Activated CD8-positive, alpha-beta T cell treated with anti-CD3 and anti-CD28 coated beads for 36 hours (primary cell): ENCODE measurements at regions of chr17 and their contacts with region 1.

Region 1: GRCh38 chr17:72556944-72557826 is 436.4 kb downstream of the SOX9 start:
- DNase-seq: peak; percentile 78
- ATAC-seq: peak; percentile 73
- H3K4me3 Mint-ChIP-seq: no peak overlapping the region
- H3K27ac Mint-ChIP-seq: no peak overlapping the region
- H3K4me1 Mint-ChIP-seq: no peaks in the 10 kb centered on the region
- H3K27me3 Mint-ChIP-seq: peaks cover 2% of the 10 kb centered on the region
- CTCF ChIP-seq: peak; percentile 72

Region 2: GRCh38 chr17:72539981-72540897 is 16.9 kb before region 1 on chr17:
- CTCF ChIA-PET with region 1: interaction called, 16 read pairs
- POLR2A ChIA-PET with region 1: no interaction called
- intact Hi-C with region 1: no loop called
- DNase-seq: peak; percentile 54
- ATAC-seq: peak; percentile 82
- H3K4me3 Mint-ChIP-seq: no peak overlapping the region
- H3K27ac Mint-ChIP-seq: no peak overlapping the region
- H3K4me1 Mint-ChIP-seq: peaks cover 5% of the 10 kb centered on the region
- H3K27me3 Mint-ChIP-seq: peaks cover 29% of the 10 kb centered on the region
- CTCF ChIP-seq: peak; percentile 78

Region 3: DNA sequence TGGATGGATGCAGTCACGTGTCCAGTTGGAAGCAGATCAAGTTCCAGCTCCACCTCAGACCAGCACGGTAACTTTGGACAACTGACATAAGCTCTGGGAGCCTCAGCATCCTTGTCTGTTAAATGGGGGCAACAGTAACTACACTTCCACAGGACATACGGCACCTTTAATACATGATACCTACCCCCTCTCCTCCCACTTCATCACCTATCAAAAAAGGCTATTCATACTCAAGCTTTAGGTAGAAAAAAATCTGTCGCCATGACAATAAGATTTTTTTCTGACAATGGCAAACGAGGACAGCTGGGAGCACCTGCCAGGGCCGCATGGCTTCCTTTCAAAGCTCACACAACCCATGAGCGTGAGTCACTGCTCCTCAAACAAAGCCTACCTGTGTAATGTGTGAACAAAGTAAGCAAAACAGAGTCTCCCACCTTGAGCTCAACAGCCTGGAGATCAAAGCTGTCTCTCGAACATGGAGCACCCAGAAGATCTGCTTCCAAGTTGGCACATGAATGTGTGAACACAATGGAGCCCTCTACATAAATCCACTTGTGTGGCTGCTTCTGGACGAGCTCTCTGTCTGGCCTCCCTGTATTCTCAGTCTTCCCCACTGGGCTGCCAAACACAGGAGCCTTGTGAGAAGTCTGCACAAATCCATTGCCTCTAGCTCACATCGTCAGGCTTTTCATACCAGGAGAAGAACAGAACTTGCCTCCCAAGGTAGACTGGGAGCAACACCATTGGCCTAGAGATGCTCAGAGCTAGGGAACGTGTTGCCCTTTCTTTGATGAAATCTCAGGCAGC is 23.3 kb after region 1 on chr17:
- CTCF ChIA-PET with region 1: interaction called, 10 read pairs
- POLR2A ChIA-PET with region 1: no interaction called
- intact Hi-C with region 1: no loop called
- DNase-seq: no peak
- ATAC-seq: no peak
- H3K4me3 Mint-ChIP-seq: no peak overlapping the region
- H3K27ac Mint-ChIP-seq: no peak overlapping the region
- H3K4me1 Mint-ChIP-seq: no peaks in the 10 kb centered on the region
- H3K27me3 Mint-ChIP-seq: peaks cover 5% of the 10 kb centered on the region
- CTCF ChIP-seq: no peak